CD8-positive, alpha-beta T cell (primary cell): ENCODE measurements at regions of chr2 and their contacts with region 1.

Region 1: GRCh38 chr2:42095923-42096408 is 48.1 kb downstream of the PKDCC start:
- DNase-seq: peak; percentile 52 to 86 (median 79)
- ATAC-seq: peak; percentile 70
- H3K4me3 ChIP-seq: no peak overlapping the region
- H3K4me3 Mint-ChIP-seq: no peak overlapping the region
- H3K27ac ChIP-seq: no peak overlapping the region
- H3K27ac Mint-ChIP-seq: no peak overlapping the region
- H3K4me1 ChIP-seq: peaks cover 37% of the 10 kb centered on the region
- H3K4me1 Mint-ChIP-seq: peaks cover 43% of the 10 kb centered on the region
- H3K27me3 ChIP-seq: no peaks in the 10 kb centered on the region
- H3K27me3 Mint-ChIP-seq: no peaks in the 10 kb centered on the region
- CTCF ChIP-seq: peak; percentile 84

Region 2: GRCh38 chr2:41222628-41223027 is 873.3 kb before region 1 on chr2:
- CTCF ChIA-PET with region 1: no interaction called
- POLR2A ChIA-PET with region 1: no interaction called
- intact Hi-C with region 1: no loop called
- DNase-seq: no peak
- ATAC-seq: no peak
- H3K4me3 ChIP-seq: no peak overlapping the region
- H3K4me3 Mint-ChIP-seq: no peak overlapping the region
- H3K27ac ChIP-seq: no peak overlapping the region
- H3K27ac Mint-ChIP-seq: no peak overlapping the region
- H3K4me1 ChIP-seq: no peaks in the 10 kb centered on the region
- H3K4me1 Mint-ChIP-seq: no peaks in the 10 kb centered on the region
- H3K27me3 ChIP-seq: no peaks in the 10 kb centered on the region
- H3K27me3 Mint-ChIP-seq: no peaks in the 10 kb centered on the region
- CTCF ChIP-seq: no peak

Region 3: GRCh38 chr2:41678639-41679038 is 417.3 kb before region 1 on chr2:
- CTCF ChIA-PET with region 1: no interaction called
- POLR2A ChIA-PET with region 1: no interaction called
- intact Hi-C with region 1: no loop called
- DNase-seq: no peak
- ATAC-seq: no peak
- H3K4me3 ChIP-seq: no peak overlapping the region
- H3K4me3 Mint-ChIP-seq: no peak overlapping the region
- H3K27ac ChIP-seq: no peak overlapping the region
- H3K27ac Mint-ChIP-seq: no peak overlapping the region
- H3K4me1 ChIP-seq: no peaks in the 10 kb centered on the region
- H3K4me1 Mint-ChIP-seq: no peaks in the 10 kb centered on the region
- H3K27me3 ChIP-seq: no peaks in the 10 kb centered on the region
- H3K27me3 Mint-ChIP-seq: no peaks in the 10 kb centered on the region
- CTCF ChIP-seq: no peak

Region 4: DNA sequence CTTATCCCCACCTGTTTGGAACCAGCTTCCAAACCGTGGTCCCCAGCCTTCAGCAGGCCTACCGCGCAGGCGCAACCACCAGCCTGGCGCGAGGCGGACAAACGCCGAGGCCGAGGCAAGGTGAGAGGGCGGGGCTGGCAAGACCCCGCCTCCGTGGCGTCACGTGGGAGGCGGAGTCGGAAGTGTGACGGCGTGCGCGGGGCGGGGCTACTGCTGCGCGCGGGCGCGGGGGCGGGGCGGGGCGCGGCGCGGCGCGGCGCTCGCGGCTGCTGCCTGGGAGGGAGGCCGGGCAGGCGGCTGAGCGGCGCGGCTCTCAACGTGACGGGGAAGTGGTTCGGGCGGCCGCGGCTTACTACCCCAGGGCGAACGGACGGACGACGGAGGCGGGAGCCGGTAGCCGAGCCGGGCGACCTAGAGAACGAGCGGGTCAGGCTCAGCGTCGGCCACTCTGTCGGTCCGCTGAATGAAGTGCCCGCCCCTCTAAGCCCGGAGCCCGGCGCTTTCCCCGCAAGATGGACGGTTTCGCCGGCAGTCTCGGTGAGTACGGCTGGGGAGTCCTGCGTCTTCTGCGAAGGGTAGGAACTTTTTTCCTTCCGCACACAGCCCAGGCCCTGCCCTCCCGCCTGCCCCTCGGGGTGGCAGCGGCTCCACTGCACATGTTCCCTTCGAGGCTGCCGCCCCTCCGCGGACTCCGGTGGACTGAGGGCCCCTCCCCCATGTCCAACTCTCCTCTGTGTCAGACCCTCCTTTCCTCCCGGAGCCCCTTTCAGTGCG is 73.3 kb after region 1 on chr2 and contains the start of gene EML4:
- CTCF ChIA-PET with region 1: interaction called, 38 read pairs
- POLR2A ChIA-PET with region 1: interaction called, 4 read pairs
- intact Hi-C with region 1: loop called (anchors 1 to 2 kb)
- DNase-seq: peak; percentile 81 to 97 (median 90)
- ATAC-seq: peak; percentile 88
- H3K4me3 ChIP-seq: peak within 1 kb of the TSS; percentile 72 to 86
- H3K4me3 Mint-ChIP-seq: no peak within 1 kb of the TSS
- H3K27ac ChIP-seq: peak within 1 kb of the TSS; percentile 77 to 92
- H3K27ac Mint-ChIP-seq: no peak within 1 kb of the TSS
- H3K4me1 ChIP-seq: peaks cover 45% of the 10 kb centered on the region
- H3K4me1 Mint-ChIP-seq: peaks cover 26% of the 10 kb centered on the region
- H3K27me3 ChIP-seq: no peaks in the 10 kb centered on the region
- H3K27me3 Mint-ChIP-seq: no peaks in the 10 kb centered on the region
- CTCF ChIP-seq: no peak
- total RNA-seq, gene EML4: 224 to 240 TPM

Region 5: GRCh38 chr2:42210203-42210602 is 114.2 kb after region 1 on chr2:
- CTCF ChIA-PET with region 1: interaction called, 10 read pairs
- POLR2A ChIA-PET with region 1: no interaction called
- intact Hi-C with region 1: no loop called
- DNase-seq: no peak
- ATAC-seq: no peak
- H3K4me3 ChIP-seq: no peak overlapping the region
- H3K4me3 Mint-ChIP-seq: no peak overlapping the region
- H3K27ac ChIP-seq: no peak overlapping the region
- H3K27ac Mint-ChIP-seq: no peak overlapping the region
- H3K4me1 ChIP-seq: peaks cover 33% of the 10 kb centered on the region
- H3K4me1 Mint-ChIP-seq: peaks cover 65% of the 10 kb centered on the region
- H3K27me3 ChIP-seq: no peaks in the 10 kb centered on the region
- H3K27me3 Mint-ChIP-seq: no peaks in the 10 kb centered on the region
- CTCF ChIP-seq: no peak

Region 6: GRCh38 chr2:42328148-42328833 is 232.3 kb after region 1 on chr2:
- CTCF ChIA-PET with region 1: interaction called, 39 read pairs
- POLR2A ChIA-PET with region 1: no interaction called
- intact Hi-C with region 1: loop called (anchors 1 to 2 kb)
- DNase-seq: peak in 2 of 9 experiments; percentile 36 to 50
- ATAC-seq: peak; percentile 45
- H3K4me3 ChIP-seq: no peak overlapping the region
- H3K4me3 Mint-ChIP-seq: no peak overlapping the region
- H3K27ac ChIP-seq: no peak overlapping the region
- H3K27ac Mint-ChIP-seq: peak overlapping the region; percentile 43
- H3K4me1 ChIP-seq: no peaks in the 10 kb centered on the region
- H3K4me1 Mint-ChIP-seq: peaks cover 7% of the 10 kb centered on the region
- H3K27me3 ChIP-seq: no peaks in the 10 kb centered on the region
- H3K27me3 Mint-ChIP-seq: no peaks in the 10 kb centered on the region
- CTCF ChIP-seq: peak; percentile 55

Region 7: DNA sequence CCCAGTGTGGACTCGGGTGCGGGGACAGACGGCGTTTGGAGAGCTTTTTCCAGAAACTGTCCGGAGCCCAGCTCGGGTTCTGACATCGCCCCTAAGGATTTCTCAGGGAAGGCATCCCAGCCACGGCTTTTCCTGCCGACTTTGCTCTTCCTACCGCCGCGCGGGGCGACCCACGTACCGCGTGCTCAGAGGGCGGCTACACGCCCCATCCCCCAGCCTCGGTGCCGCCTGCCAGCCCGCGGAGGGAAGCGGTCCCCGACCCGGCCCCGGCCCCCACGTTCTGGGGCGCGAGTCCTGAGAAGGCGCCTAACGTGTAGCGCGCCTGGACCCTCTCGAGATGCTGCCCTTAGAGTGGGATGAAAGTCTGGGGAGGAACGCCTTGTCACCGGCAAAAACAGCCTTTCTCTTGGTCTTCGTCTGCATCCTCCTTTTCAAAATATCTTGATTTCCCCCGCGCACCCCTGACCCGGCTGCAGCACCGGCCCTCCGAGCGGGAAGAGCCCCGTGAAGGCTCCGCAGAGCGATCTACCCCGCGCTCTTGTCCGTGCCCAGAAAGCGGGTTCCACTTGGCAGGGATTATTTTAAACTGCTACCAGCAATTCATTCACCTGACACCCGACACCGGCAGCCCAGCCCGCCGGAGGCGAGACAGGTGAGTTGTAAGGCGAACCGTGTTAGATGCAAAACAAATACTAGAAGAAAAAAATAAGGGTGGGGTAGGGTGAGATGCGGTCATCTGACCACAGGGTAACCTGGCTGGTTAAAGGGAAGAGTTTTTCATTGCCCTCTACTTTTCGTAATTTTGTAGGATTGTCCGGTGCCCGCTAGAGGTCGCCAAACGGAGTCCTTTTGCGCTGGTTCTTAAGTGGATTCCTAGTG is 398.6 kb after region 1 on chr2:
- CTCF ChIA-PET with region 1: no interaction called
- POLR2A ChIA-PET with region 1: no interaction called
- intact Hi-C with region 1: loop called in 1 of 2 experiments (anchors 10 kb)
- DNase-seq: peak; percentile 51 to 84 (median 75)
- ATAC-seq: peak; percentile 43
- H3K4me3 ChIP-seq: peak overlapping the region; percentile 58 to 74
- H3K4me3 Mint-ChIP-seq: peak overlapping the region; percentile 93
- H3K27ac ChIP-seq: peak overlapping the region in 1 of 2 experiments; percentile 15
- H3K27ac Mint-ChIP-seq: peak overlapping the region; percentile 89
- H3K4me1 ChIP-seq: no peaks in the 10 kb centered on the region
- H3K4me1 Mint-ChIP-seq: peaks cover 32% of the 10 kb centered on the region
- H3K27me3 ChIP-seq: peaks cover 0 to 4% of the 10 kb centered on the region in 2 experiments
- H3K27me3 Mint-ChIP-seq: peaks cover 9% of the 10 kb centered on the region
- CTCF ChIP-seq: peak; percentile 92